GM12878 (cell line): ENCODE measurements at regions of chr12 and their contacts with region 1.

Region 1: DNA sequence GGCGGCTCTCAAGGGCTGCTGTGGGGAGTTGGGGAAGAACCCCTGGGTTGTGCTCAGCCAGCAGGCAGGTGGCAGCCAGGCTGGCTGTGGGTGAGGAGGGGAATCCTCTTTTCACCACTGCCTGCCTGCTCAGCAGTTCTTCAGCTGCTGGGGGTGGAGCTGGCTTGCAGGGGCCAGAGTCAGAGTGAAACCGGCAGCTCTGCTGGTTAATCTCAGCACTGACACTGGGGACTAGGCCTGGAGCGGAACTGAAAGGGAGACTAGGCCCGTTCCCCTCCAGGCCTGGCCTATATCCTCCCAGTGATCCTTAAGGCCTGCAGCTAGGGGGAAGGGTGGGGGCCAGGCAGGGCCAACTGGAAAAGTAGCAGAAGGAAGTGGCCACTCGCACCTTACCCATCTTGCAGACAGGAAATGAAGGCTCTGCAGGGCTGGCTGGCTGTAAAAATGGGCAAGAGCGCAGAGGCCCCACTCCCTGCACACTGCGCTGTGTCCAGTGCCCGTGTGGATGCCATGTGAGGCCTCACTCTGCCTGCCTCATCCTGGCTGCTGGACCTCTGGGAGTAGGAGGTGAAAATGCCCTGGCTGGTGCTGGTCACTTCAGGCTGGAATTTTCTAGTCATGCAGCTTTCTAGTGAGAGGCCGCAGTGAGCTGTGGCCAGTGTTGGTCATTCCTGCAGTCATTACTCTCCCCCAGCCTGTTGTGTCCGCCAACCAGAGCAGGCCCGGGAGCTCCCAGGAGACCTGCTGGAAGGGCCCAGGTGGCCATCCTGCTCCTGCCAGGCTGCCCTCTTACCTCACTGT is 39.4 kb downstream of the SH2B3 start:
- DNase-seq: peak; percentile 94
- ATAC-seq: peak; percentile 91
- H3K4me3 ChIP-seq: peak overlapping the region; percentile 59; the same call in 1 of the 2 replicates
- H3K27ac ChIP-seq: peak overlapping the region; percentile 95
- H3K4me1 ChIP-seq: peaks cover 88% of the 10 kb centered on the region
- H3K27me3 ChIP-seq: no peaks in the 10 kb centered on the region
- CTCF ChIP-seq: peak in 1 of 3 experiments; percentile 5; a peak in 1 of 6 replicates
- EP300 ChIP-seq: peak; percentile 92 to 94
- POLR2A ChIP-seq: peak; percentile 74
- RAD21 ChIP-seq: peak; percentile 13; the same call in 1 of the 2 replicates

Region 2: DNA sequence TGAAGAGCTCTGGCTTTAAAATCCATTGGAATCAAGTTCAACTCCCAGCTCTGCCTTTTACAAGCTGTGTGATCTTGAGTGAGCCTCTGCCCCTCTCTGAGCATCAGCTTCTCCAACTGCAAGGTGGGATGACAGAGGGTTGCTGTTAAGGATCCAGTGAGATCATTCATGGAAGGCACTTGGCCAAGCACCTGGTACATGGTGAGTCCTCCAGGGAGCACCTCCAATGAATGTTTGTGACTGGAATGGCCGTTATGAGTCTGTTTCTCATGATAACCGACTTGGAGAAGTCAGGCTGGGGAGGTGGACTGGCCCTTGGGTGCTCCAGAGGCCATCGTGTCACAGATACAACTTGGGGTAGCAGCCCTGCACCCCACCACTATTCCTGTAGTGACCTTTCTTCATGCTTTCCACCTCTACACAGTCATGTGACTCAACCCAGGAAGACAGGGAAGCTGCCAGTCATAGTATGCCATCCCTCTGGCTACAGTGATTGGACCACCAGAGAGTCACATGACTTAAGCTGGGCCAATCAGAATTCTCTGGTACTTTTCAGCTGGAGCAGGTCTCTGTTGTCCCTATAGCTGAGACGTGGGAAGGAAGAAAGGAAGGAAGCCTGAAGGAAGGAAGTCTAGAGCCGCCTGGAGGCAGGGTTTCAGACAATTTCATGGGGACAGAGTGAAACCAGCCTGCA is 378.2 kb before region 1 on chr12:
- CTCF ChIA-PET with region 1: no interaction called
- POLR2A ChIA-PET with region 1: no interaction called
- RAD21 ChIA-PET with region 1: no interaction called
- SMC1A ChIA-PET with region 1: no interaction called
- in situ Hi-C with region 1: no loop called
- intact Hi-C with region 1: no loop called
- DNase-seq: no peak
- ATAC-seq: no peak
- H3K4me3 ChIP-seq: no peak overlapping the region
- H3K27ac ChIP-seq: no peak overlapping the region
- H3K4me1 ChIP-seq: no peaks in the 10 kb centered on the region
- H3K27me3 ChIP-seq: no peaks in the 10 kb centered on the region
- CTCF ChIP-seq: no peak
- EP300 ChIP-seq: no peak
- POLR2A ChIP-seq: no peak
- RAD21 ChIP-seq: no peak

Region 3: DNA sequence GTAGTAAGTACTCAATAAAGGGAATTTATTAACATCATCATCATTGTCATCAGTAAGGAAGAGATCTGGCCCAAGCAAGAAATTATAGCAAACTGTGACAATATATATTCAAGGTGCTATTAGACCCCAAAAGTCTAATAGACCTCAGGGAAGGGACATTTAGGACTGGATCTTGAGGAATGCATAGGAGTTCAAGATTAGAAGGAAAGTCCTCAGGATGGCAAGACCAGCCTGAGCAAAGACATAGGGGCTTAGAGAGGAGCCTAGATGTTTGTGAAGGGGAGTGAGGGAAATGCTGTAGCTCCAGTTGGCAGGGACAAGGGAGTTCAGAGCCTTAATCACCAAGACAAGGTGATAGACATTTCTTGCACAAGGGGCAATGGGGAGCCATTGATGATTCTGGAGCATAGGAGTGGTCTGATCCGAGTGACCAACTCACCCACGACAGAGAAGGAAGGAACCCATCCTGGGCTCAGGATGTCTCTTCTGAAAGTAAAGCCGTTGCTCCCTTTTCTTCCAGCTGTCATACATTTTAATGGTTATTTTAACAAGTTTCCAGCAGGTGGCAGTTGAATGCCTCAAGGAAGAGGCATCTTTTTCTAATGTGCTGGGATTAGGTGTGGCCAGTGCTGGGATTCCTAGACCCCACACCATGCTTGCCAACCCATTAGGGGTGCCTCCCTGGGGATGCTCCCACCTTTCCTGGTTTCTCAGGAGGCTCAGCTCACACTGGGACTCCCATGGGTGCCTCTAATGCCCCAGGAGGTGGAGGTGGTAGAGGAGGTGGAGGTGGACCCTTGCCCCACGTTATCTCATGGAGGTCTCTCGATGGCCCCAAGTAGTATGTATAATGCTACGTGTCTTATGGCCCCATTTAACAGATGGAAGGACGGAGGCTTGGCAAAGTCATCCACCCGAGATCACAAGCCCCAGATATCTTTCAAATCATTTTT is 114.0 kb before region 1 on chr12:
- CTCF ChIA-PET with region 1: no interaction called
- POLR2A ChIA-PET with region 1: no interaction called
- RAD21 ChIA-PET with region 1: no interaction called
- SMC1A ChIA-PET with region 1: no interaction called
- in situ Hi-C with region 1: loop called (anchors 5 kb)
- intact Hi-C with region 1: loop called (anchors 2 kb)
- DNase-seq: no peak
- ATAC-seq: peak; percentile 69
- H3K4me3 ChIP-seq: no peak overlapping the region
- H3K27ac ChIP-seq: no peak overlapping the region
- H3K4me1 ChIP-seq: no peaks in the 10 kb centered on the region
- H3K27me3 ChIP-seq: no peaks in the 10 kb centered on the region; a peak in 2 of 4 replicates
- CTCF ChIP-seq: peak; percentile 50 to 62 (median 53)
- EP300 ChIP-seq: no peak
- POLR2A ChIP-seq: no peak
- RAD21 ChIP-seq: peak; percentile 54

Region 4: GRCh38 chr12:111428728-111429175 is 16.4 kb before region 1 on chr12:
- CTCF ChIA-PET with region 1: interaction called, 160 read pairs
- POLR2A ChIA-PET with region 1: interaction called, 80 read pairs
- RAD21 ChIA-PET with region 1: interaction called, 103 read pairs
- SMC1A ChIA-PET with region 1: interaction called, 86 read pairs
- in situ Hi-C with region 1: no loop called
- intact Hi-C with region 1: loop called (anchors 1 kb)
- DNase-seq: no peak
- ATAC-seq: peak; percentile 11
- H3K4me3 ChIP-seq: peak overlapping the region; percentile 52
- H3K27ac ChIP-seq: peak overlapping the region; percentile 95
- H3K4me1 ChIP-seq: peaks cover 79% of the 10 kb centered on the region
- H3K27me3 ChIP-seq: no peaks in the 10 kb centered on the region
- CTCF ChIP-seq: no peak
- EP300 ChIP-seq: no peak
- POLR2A ChIP-seq: peak; percentile 52
- RAD21 ChIP-seq: no peak

Region 5: DNA sequence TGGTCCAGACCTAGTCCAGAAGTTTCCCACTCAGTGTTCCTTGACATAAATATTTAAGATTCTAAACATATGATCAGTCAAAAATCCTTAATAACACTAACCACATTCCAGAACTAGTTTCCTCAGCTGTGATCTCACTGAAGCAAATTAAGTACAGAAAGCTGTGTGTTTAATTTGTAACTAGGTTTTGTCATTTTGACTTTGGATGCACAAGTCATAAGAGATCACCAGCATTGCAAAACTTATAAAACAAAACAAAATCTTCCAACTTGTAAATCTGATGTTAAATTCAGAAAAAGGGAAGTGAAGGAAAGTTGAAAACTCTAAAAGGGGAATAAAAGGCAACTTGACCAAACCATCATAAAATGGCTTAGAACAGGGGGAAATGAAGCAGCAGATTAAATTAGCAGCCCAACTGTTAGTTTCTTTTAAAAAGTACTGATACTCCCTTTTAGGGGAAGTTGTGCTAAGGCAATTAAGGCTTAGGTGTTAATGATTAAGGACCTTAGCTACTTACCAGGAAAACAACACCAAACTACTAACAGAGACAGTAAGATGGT is 17.2 kb after region 1 on chr12:
- CTCF ChIA-PET with region 1: interaction called, 56 read pairs
- POLR2A ChIA-PET with region 1: interaction called, 3 read pairs
- RAD21 ChIA-PET with region 1: interaction called, 9 read pairs
- SMC1A ChIA-PET with region 1: interaction called, 49 read pairs
- in situ Hi-C with region 1: no loop called
- intact Hi-C with region 1: no loop called
- DNase-seq: no peak
- ATAC-seq: peak; percentile 80
- H3K4me3 ChIP-seq: no peak overlapping the region
- H3K27ac ChIP-seq: no peak overlapping the region
- H3K4me1 ChIP-seq: no peaks in the 10 kb centered on the region
- H3K27me3 ChIP-seq: no peaks in the 10 kb centered on the region
- CTCF ChIP-seq: no peak
- EP300 ChIP-seq: no peak
- POLR2A ChIP-seq: no peak
- RAD21 ChIP-seq: no peak